ENCODE measurements at regions of chr13 and their contacts with region 1.

Region 1: DNA sequence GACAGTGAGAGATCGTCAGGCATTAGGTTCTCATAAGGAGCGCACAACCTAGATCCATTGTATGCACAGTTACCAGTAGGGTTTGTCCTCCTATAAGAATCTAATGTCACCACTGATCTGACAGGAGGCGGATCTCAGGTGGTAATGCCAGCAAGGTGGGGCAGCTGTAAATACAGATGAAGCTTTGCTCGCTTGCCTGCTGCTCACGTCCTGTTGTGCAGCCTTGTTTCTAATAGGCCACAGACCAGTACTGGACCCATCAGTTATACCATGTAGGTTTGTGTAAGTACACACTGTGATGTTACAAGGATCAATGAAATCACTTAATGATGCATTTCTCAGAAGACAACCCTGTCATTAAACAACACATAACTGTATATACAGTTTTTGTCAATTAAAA is 23.5 kb downstream of the VWA8 start:
- DNase-seq: no peak
- H3K4me3 ChIP-seq: no peak overlapping the region
- CTCF ChIP-seq: no peak
- POLR2A ChIP-seq: no peak

Region 2: GRCh38 chr13:41955605-41956004 is 18.2 kb after region 1 on chr13:
- intact Hi-C with region 1: loop called (anchors 2 kb)
- DNase-seq: no peak
- H3K4me3 ChIP-seq: no peak overlapping the region
- CTCF ChIP-seq: no peak
- POLR2A ChIP-seq: no peak